Right ventricle myocardium inferior (tissue), 1 donor: ENCODE measurements at regions of chr18 and their contacts with region 1.

Region 1: DNA sequence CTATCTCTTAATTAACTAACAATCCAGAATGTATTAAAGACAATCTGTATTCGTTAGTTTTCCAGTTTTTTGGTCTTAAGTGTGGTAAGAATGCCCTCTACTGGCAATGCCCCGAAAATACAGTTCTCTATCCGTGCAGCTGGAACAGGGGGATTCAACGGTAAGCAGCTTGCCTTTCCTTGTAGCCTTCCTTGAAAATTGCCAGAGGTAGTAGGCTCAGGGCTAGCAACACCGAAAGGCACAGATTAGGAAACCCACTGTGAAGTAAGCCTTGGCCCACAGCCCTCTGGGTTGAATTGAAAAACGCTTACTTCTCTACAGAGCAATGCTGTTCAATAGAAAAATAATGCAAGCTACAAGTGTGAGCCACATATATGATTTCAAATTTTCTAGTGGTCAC is 17.1 kb upstream of the VPS4B start:
- DNase-seq: no peak
- ATAC-seq: peak; percentile 68

Region 2: GRCh38 chr18:63016270-63016669 is 423.1 kb before region 1 on chr18:
- intact Hi-C with region 1: loop called (anchors 5 kb)
- DNase-seq: peak; percentile 43
- ATAC-seq: no peak

Region 3: DNA sequence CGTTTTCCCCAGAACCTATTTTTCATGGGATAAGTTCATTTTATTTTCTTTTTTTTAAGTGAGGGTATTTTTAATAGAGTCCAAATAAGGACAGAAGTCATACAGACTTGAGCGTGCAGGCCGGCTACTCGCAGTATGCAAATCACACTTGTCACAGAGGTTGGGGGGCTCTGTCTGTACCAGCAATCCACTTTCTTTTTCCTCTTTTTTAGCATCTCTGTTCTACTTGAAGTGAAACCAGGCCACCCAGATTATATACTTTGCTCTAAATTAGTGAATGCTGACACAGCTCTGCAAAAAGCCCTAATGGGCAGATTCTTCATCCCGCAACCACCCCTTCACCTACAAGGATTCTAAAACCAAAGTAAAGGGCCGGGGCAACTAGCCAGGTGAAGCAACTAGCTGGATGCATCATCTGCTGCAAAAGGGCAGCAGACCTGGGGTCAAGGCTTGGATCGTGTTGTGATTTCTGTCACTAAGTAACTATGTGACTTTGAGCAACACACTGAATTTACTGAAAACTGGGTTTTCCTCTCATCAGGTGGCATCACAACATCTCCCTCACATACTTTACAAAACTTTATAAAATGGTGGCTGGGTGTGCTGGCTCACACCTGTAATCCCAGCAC is 90.7 kb before region 1 on chr18:
- intact Hi-C with region 1: loop called (anchors 2 kb)
- DNase-seq: no peak
- ATAC-seq: no peak